Heart left ventricle (tissue), 16 donors: ENCODE measurements at regions of chr9 and their contacts with region 1.

Region 1: DNA sequence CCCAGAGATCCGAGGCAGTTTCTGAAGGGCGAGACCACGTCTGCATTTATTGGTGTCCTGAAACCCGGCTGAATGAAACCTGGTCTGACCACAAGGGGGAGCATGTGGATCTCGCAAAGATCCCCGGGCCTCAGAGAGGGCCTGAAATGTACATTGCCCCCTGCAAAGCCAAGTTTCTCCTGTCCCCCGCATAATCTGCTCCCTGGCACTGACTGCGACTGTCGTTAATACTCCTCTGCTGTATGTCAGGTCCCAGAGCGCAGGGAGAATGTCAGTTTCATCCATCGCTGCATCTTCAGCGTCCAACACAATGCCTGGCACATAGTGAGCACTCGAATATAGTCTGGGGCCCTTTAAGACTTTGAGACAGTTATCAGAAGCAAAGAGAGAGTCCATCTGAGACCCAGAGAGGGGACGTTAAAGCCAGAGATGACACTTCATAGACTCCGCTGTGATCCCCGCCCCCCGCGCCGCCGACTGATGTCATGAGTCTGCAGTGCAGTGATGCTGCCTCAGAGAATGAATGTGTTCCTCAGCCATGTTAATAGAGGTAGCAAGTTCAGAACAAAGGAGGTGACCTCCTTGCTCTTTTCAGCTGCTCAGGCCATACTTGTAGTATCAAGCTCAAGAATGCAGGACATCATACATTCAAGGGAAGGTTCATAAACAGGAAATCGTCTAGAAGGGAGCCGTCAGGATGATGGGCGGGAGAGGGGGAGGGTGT is 74.5 kb upstream of the BARHL1 start:
- DNase-seq: peak in 4 of 5 donors; percentile 38 to 56 (median 53)
- ATAC-seq: peak; percentile 49 to 71 (median 60)
- H3K4me3 ChIP-seq: no peak overlapping the region
- H3K27ac ChIP-seq: no peak overlapping the region
- H3K4me1 ChIP-seq: peaks cover 0 to 4% (median 0%) of the 10 kb centered on the region in 12 donors
- H3K27me3 ChIP-seq: peaks cover 0 to 36% (median 3%) of the 10 kb centered on the region in 9 donors
- CTCF ChIP-seq: peak; percentile 62 to 81 (median 74)
- POLR2A ChIP-seq: no peak

Region 2: GRCh38 chr9:132412089-132412488 is 95.8 kb before region 1 on chr9:
- intact Hi-C with region 1: loop called in 2 of 10 experiments (anchors 5 to 10 kb)
- DNase-seq: no peak
- ATAC-seq: no peak
- H3K4me3 ChIP-seq: no peak overlapping the region
- H3K27ac ChIP-seq: no peak overlapping the region
- H3K4me1 ChIP-seq: peaks cover 0 to 41% (median 23%) of the 10 kb centered on the region in 12 donors
- H3K27me3 ChIP-seq: peaks cover 0 to 69% (median 40%) of the 10 kb centered on the region in 9 donors
- CTCF ChIP-seq: peak; percentile 29 to 60 (median 47)
- POLR2A ChIP-seq: no peak

Region 3: DNA sequence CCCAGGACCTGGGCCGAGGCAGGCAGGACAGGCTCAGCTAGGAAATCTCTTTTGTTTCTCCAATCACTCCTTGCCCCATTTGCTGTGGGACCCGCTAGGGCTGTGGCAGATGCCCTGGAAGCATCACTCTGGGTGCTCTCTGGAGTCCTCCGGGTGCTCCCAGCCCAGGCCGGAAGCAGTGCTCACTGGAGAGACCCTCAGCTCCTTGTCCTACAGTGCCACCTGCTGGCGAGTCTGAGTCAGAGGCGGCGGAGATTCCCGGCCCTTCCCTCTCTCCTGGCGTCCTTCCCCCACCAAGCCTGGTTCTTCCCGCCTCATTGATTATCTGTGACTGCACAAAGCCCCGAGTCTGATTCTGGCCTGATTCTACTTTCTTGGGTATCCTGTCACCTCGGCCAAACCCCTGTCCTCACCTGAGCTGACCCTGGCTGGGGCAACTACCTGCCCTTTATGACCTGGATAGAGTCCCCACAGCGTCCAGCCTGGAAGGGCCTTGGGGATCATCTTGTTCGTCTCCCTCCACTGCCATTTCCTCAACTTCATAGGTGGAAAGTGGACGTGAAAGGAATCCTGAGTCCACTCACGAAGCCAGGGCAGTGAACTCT is 67.2 kb after region 1 on chr9:
- intact Hi-C with region 1: loop called (anchors 1 to 5 kb)
- DNase-seq: peak; percentile 54 to 83 (median 66)
- ATAC-seq: peak; percentile 59 to 91 (median 85)
- H3K4me3 ChIP-seq: no peak overlapping the region
- H3K27ac ChIP-seq: no peak overlapping the region
- H3K4me1 ChIP-seq: peaks cover 0 to 5% (median 0%) of the 10 kb centered on the region in 12 donors
- H3K27me3 ChIP-seq: peaks cover 22 to 64% (median 34%) of the 10 kb centered on the region in 9 donors
- CTCF ChIP-seq: peak; percentile 53 to 82 (median 70)
- POLR2A ChIP-seq: no peak

Region 4: DNA sequence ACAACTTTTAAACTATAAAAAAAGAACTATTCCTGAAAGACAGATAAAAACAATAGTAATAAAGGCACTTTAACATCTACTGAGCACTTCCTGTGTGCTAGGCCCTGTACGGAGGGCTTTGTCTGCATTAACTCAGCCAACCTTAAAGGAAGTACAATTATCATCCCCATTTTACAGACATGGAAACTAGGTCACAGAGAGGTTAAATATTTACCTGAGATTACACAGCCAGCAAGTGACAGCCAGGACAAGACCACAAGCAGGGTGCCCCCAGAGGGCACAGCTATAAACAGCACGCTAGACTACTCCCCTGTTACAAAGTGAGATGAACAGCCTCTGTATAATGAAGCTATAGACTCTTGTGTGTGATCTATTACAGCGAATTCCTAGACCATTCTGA is 136.3 kb after region 1 on chr9:
- intact Hi-C with region 1: loop called in 1 of 10 experiments (anchors 10 kb)
- DNase-seq: no peak
- ATAC-seq: no peak
- H3K4me3 ChIP-seq: no peak overlapping the region
- H3K27ac ChIP-seq: no peak overlapping the region
- H3K4me1 ChIP-seq: no peaks in the 10 kb centered on the region
- H3K27me3 ChIP-seq: no peaks in the 10 kb centered on the region
- CTCF ChIP-seq: no peak
- POLR2A ChIP-seq: no peak

Region 5: DNA sequence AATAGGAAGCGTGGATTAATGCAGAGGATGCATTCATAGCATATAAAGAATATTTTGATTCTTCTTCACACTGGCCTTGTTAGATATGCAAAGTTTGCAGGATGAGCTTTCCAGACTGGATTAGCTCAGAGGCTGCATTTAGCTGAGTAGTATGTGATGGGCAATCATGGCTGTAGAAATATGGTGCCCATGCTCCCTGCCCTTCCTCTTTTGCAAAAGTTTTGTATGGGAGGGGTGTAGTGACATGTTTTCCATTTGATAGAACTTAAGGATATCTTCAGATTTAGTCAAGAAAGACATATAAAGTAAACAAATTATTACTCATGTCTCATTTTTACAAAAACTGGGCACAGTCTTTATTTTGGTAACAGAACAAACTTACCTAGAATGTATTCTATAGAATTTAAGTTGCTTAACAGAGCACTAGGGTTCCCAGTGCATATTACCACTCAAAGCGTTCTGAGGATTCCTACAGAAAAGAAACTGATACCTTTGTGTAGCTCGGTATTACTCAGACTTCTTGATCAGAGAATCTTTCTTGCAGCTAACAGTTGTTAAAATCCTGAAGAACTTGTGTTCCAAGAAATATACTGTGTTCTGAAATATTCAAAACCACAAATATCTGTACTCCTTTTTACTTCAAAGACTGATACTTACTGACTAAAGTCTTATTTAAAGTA is 172.2 kb after region 1 on chr9:
- intact Hi-C with region 1: no loop called
- DNase-seq: no peak
- ATAC-seq: no peak
- H3K4me3 ChIP-seq: no peak overlapping the region
- H3K27ac ChIP-seq: no peak overlapping the region
- H3K4me1 ChIP-seq: peaks cover 0 to 14% (median 0%) of the 10 kb centered on the region in 12 donors
- H3K27me3 ChIP-seq: no peaks in the 10 kb centered on the region
- CTCF ChIP-seq: no peak
- POLR2A ChIP-seq: no peak